ENCODE measurements at regions of chr7 and their contacts with region 1.

Region 1: DNA sequence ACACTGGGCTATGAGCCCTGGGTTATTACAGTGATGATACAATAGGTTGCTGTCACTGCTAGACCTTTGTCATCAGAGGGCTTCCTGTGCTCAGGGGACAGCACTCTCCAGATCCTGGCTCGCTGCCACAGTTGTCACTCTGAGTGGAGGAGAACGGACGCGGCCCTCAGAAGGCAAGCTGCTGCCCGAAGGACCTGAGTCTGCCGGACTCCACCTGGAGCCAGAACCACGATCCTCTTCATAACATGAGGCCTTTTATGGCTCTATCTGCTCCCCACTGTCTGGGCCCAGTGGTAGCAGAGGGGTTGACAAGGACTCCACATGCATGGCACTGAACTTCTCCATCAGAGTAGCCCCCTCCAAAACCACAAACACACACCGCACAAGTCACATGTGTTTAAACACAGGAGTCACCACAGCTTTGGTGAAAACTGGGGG is 94.7 kb upstream of the EFCAB10 start:
- DNase-seq: no peak
- H3K4me3 ChIP-seq: no peak overlapping the region
- H3K27me3 ChIP-seq: no peaks in the 10 kb centered on the region
- CTCF ChIP-seq: no peak

Region 2: DNA sequence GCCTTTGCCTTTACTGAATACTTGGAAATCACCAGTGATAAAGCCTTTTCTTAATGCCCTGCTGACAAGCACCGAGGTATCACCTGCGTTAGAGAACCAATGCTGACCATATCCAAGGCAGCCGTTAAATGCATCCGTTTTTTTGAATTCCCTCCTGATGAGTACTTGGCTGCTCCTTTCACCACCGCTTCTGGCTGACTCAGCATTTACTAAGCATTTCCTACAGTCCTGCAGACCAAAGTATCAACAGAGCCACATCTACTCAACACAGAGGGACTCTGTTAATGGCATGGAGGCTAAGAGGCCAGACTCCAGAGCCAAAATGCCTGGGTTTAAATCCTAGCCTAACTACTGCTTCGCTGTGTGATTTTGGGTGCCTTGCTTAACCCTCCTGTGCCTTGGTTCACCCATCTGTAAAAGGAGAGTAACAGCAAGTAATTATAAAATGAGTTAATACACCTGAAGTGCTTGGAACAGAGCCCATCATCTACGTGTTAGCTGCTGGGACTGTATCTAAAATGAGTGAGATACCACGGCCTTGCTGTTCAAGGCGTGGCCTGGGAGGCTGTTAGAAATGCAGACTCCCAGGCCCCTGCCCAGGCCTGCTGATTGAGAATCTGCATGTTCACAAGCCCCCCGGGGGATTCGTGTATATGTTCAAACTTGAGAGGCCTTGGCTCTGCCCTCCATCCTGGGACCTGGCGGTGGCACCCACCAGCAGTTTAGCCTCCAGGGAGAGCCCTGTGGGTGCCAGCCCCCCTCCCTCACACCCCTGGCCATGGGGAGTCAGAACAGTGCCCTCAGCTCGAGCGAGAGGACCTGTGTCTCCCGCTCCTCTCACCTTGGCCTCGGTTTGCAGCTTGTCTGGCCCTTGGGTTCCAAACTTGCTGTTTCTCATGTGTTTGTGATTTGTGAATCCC is 63.8 kb before region 1 on chr7:
- CTCF ChIA-PET with region 1: no interaction called
- POLR2A ChIA-PET with region 1: no interaction called
- DNase-seq: no peak
- H3K4me3 ChIP-seq: no peak overlapping the region
- H3K27me3 ChIP-seq: no peaks in the 10 kb centered on the region
- CTCF ChIP-seq: no peak

Region 3: DNA sequence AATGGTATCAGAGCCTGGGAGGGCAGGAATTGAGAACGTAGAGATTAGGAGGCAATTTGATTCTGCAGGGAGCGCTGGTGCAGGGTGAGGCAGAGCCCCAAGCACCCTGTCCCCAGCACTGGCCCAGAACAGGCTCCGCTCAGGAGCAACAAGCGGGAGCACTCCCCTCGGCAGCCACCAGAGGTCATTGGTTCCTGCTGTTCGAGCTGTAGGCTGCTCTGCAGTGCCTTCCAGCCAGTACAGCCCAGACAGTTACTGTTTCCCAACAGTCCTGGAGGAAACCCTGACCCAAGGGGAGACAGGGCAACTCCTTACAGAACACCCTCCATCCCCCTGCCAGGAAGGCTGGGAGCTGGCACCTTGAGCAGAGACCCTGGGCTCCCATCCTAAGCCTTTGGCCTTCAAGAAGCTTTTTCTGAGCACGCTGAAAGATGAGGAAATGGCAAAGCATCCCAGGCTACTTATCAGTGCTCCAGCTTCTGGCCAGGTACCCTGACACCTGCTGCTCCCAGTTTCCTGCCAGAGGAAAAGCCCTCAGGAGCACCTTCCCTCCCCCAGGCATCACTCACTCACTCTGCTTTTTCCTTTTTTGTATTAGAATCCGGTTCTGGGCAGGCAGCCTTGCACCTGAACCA is 23.5 kb before region 1 on chr7:
- CTCF ChIA-PET with region 1: interaction called, 7 read pairs
- POLR2A ChIA-PET with region 1: interaction called, 28 read pairs
- DNase-seq: no peak
- H3K4me3 ChIP-seq: no peak overlapping the region
- H3K27me3 ChIP-seq: no peaks in the 10 kb centered on the region
- CTCF ChIP-seq: peak; percentile 96

Measured in BJ (cell line).